PC-3 (cell line): ENCODE measurements at regions of chr9 and their contacts with region 1.

Region 1: DNA sequence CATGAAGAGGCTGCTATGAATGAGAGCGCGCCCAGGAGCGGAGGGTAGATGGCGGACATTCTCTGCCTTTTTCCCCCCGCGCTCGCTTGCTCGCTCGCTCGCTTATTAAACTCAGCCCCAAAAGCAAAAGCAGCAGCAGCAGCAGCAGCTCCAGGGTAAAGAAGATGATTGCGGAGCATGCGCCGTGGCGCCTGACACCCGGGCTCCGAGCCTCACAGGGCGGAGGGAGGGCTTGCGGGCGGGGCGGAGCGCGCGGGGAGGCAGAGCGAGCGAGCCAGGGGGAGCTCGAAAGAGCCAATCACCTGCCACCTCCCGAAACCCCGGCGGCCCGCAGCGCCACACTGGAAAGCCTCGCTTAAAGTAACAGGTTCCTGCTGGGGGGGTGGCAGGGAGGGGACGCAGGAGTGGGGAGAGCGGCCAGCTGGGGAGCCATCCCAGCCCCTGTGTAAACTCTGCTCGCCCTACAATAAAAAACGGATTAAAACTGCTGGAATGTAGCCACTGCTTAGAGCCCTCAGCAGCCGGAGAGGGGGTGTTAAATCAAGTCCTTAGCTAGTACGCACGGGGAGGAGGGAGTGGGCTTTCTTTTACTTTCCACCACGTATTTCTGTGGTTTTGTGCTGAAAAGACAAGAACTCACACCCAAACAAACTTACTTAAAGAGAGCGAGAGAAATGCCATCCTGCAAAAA is at the start of gene MLLT3:
- DNase-seq: peak; percentile 88
- ATAC-seq: peak; percentile 70
- H3K4me3 ChIP-seq: peak within 1 kb of the TSS; percentile 87
- H3K27ac ChIP-seq: peak within 1 kb of the TSS; percentile 45
- H3K4me1 ChIP-seq: peaks cover 26% of the 10 kb centered on the region
- H3K27me3 ChIP-seq: no peaks in the 10 kb centered on the region
- CTCF ChIP-seq: no peak
- total RNA-seq, gene MLLT3: 6.4 and 7.1 TPM in 2 replicates

Region 2: GRCh38 chr9:20426019-20426418 is 196.5 kb before region 1 on chr9:
- CTCF ChIA-PET with region 1: interaction called, 6 read pairs
- POLR2A ChIA-PET with region 1: no interaction called
- intact Hi-C with region 1: loop called (anchors 5 kb)
- DNase-seq: no peak
- ATAC-seq: no peak
- H3K4me3 ChIP-seq: no peak overlapping the region
- H3K27ac ChIP-seq: no peak overlapping the region
- H3K4me1 ChIP-seq: no peaks in the 10 kb centered on the region
- H3K27me3 ChIP-seq: no peaks in the 10 kb centered on the region
- CTCF ChIP-seq: no peak

Region 3: DNA sequence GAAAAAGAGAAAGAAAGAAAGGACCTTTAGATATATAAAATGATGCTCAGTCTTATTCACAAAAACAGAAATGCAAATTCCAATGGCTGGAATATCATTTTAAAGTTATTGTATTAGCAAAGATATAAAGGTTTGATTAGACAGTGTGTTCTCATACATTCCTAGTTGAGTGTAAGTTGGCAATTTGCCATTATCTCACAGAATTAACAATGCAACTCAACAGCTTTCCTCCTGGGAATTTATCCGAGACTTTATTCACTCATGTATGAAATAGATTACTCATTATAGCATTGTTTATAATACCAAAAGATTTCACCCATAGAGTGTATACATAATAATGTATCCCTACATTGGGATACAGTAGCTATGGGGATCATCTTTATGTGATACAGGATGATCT is 26.9 kb after region 1 on chr9:
- CTCF ChIA-PET with region 1: no interaction called
- POLR2A ChIA-PET with region 1: interaction called, 14 read pairs
- intact Hi-C with region 1: no loop called
- DNase-seq: peak; percentile 21
- ATAC-seq: no peak
- H3K4me3 ChIP-seq: no peak overlapping the region
- H3K27ac ChIP-seq: no peak overlapping the region
- H3K4me1 ChIP-seq: no peaks in the 10 kb centered on the region; the same call in 1 of the 2 replicates
- H3K27me3 ChIP-seq: no peaks in the 10 kb centered on the region
- CTCF ChIP-seq: no peak

Region 4: GRCh38 chr9:20884985-20885593 is 262.6 kb after region 1 on chr9:
- CTCF ChIA-PET with region 1: interaction called, 6 read pairs
- POLR2A ChIA-PET with region 1: no interaction called
- intact Hi-C with region 1: loop called (anchors 5 kb)
- DNase-seq: peak; percentile 54
- ATAC-seq: peak; percentile 64
- H3K4me3 ChIP-seq: no peak overlapping the region
- H3K27ac ChIP-seq: no peak overlapping the region
- H3K4me1 ChIP-seq: no peaks in the 10 kb centered on the region
- H3K27me3 ChIP-seq: no peaks in the 10 kb centered on the region
- CTCF ChIP-seq: peak; percentile 57

Region 5: GRCh38 chr9:20980832-20981455 is 358.5 kb after region 1 on chr9:
- CTCF ChIA-PET with region 1: no interaction called
- POLR2A ChIA-PET with region 1: no interaction called
- intact Hi-C with region 1: loop called (anchors 5 kb)
- DNase-seq: peak; percentile 62
- ATAC-seq: peak; percentile 72
- H3K4me3 ChIP-seq: no peak overlapping the region
- H3K27ac ChIP-seq: peak overlapping the region; percentile 66
- H3K4me1 ChIP-seq: peaks cover 34% of the 10 kb centered on the region
- H3K27me3 ChIP-seq: no peaks in the 10 kb centered on the region
- CTCF ChIP-seq: no peak